Ascending aorta (tissue), 2 donors: ENCODE measurements at regions of chr11 and their contacts with region 1.

Region 1: DNA sequence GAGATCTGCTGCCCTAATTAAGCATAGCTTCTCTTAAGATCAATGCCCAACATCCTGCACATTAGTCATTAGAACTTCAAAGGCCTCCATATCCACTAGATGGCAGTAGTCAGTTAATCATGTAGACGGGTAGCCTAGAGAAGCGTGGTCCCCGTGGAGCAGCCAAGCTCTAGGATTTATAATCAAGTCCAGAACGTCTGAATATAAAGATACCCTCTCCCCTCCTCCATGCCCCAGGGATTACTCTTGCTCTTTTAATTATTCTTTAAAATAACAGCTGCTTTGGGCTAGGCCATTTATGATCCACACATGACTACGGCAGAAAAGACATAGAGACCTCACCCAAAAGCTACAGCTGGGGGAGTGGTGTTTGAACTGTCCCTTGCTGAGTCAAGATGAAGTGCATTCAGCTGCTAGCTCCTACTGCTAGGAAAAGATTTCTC is 327.6 kb upstream of the PLET1 start:
- DNase-seq: peak in 1 of 2 donors; percentile 77
- H3K4me3 ChIP-seq: no peak overlapping the region
- H3K27ac ChIP-seq: no peak overlapping the region
- H3K4me1 ChIP-seq: no peaks in the 10 kb centered on the region
- H3K27me3 ChIP-seq: no peaks in the 10 kb centered on the region
- CTCF ChIP-seq: peak; percentile 59 to 75 (median 64)

Region 2: GRCh38 chr11:112537846-112538330 is 50.4 kb before region 1 on chr11:
- intact Hi-C with region 1: no loop called
- DNase-seq: no peak
- H3K4me3 ChIP-seq: no peak overlapping the region
- H3K27ac ChIP-seq: no peak overlapping the region
- H3K4me1 ChIP-seq: peaks cover 0 to 6% of the 10 kb centered on the region in 2 donors
- H3K27me3 ChIP-seq: no peaks in the 10 kb centered on the region
- CTCF ChIP-seq: no peak

Region 3: GRCh38 chr11:112689851-112690250 is 101.6 kb after region 1 on chr11:
- intact Hi-C with region 1: no loop called
- DNase-seq: no peak
- H3K4me3 ChIP-seq: no peak overlapping the region
- H3K27ac ChIP-seq: no peak overlapping the region
- H3K4me1 ChIP-seq: no peaks in the 10 kb centered on the region
- H3K27me3 ChIP-seq: no peaks in the 10 kb centered on the region
- CTCF ChIP-seq: no peak

Region 4: DNA sequence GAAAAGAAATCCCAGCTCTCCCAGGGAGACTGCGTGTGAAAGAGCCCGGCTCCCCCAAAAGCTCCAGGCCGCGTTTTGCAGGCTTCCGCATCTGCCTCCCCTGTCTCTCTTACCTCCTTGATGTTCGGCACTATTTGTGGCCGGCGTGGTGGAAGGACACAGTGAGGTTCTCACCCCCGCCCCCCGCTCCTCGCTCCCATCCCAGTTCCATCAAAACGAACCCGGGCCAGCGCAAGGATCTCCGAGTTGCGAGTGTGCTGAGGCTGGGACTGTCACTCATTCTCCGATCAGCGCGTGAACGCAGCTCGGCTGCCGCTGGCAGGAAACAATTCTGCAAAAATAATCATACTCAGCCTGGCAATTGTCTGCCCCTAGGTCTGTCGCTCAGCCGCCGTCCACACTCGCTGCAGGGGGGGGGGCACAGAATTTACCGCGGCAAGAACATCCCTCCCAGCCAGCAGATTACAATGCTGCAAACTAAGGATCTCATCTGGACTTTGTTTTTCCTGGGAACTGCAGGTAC is 372.9 kb after region 1 on chr11 and contains the start of gene NCAM1:
- intact Hi-C with region 1: loop called (anchors 1 kb)
- DNase-seq: peak in 1 of 2 donors; percentile 68
- H3K4me3 ChIP-seq: peak within 1 kb of the TSS; percentile 69 to 79
- H3K27ac ChIP-seq: peak within 1 kb of the TSS in 1 of 2 donors; percentile 1
- H3K4me1 ChIP-seq: peaks cover 0 to 7% of the 10 kb centered on the region in 2 donors
- H3K27me3 ChIP-seq: no peaks in the 10 kb centered on the region
- CTCF ChIP-seq: no peak
- total RNA-seq, gene NCAM1: 3.3 TPM

Region 5: DNA sequence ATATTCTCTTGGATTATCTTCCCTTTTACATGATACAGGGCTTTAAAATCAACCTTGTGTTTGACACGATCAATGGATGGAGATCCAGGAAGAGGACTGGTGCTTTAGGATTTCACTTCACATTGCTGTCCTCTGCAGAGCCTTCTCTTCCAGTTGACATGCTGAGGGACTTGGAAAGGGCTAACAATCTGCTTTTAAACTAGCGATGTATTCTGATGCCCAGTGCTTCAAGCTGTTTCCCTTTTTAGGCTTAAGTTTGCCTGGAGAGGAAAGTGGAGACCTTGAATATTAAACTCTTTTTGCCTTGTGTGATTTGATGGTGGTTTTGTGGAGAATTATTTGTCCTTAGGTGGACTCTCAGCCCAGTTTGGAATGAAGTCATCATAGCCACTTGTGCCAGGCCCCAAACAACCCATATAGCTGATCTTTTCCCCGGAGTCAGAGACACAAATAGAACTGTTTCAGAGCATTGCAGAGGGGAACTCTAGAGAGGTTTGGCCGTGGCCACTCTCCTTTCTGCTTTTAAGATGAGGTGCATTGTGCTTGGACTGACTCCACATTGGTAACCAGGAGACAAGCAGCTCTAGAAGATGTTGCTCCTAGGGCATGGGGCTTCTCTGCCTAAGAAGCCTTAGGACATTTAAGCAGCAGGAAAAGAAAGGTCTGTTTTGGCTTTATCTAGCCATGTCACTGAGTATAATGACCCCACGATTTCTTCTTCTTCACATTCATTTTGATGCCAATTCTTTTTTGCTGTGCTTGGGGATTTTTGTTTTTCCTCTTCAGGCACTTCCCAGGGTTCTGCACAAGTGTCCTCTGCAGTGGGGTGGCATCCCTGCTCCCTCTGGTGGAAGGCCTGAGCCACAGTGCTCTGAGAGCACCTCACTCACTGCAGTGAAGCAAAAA is 525.8 kb after region 1 on chr11:
- intact Hi-C with region 1: loop called (anchors 1 kb)
- DNase-seq: peak in 1 of 2 donors; percentile 79
- H3K4me3 ChIP-seq: peak overlapping the region in 1 of 2 donors; percentile 5
- H3K27ac ChIP-seq: peak overlapping the region; percentile 17 to 72
- H3K4me1 ChIP-seq: peaks cover 0 to 12% of the 10 kb centered on the region in 2 donors
- H3K27me3 ChIP-seq: no peaks in the 10 kb centered on the region
- CTCF ChIP-seq: peak; percentile 62 to 73 (median 69)

Region 6: GRCh38 chr11:113162592-113162962 is 574.3 kb after region 1 on chr11:
- intact Hi-C with region 1: loop called (anchors 5 kb)
- DNase-seq: peak in 1 of 2 donors; percentile 71
- H3K4me3 ChIP-seq: no peak overlapping the region
- H3K27ac ChIP-seq: peak overlapping the region; percentile 28 to 44
- H3K4me1 ChIP-seq: peaks cover 0 to 22% of the 10 kb centered on the region in 2 donors
- H3K27me3 ChIP-seq: no peaks in the 10 kb centered on the region
- CTCF ChIP-seq: peak in 1 of 3 experiments; percentile 53

Region 7: GRCh38 chr11:113289431-113290187 is 701.3 kb after region 1 on chr11:
- intact Hi-C with region 1: loop called (anchors 1 kb)
- DNase-seq: peak in 1 of 2 donors; percentile 75
- H3K4me3 ChIP-seq: no peak overlapping the region
- H3K27ac ChIP-seq: no peak overlapping the region
- H3K4me1 ChIP-seq: no peaks in the 10 kb centered on the region
- H3K27me3 ChIP-seq: no peaks in the 10 kb centered on the region
- CTCF ChIP-seq: peak; percentile 75 to 94 (median 78)